Transverse colon (tissue), 4 donors: ENCODE measurements at regions of chr9 and their contacts with region 1.

Region 1: GRCh38 chr9:73081979-73082657 is 69.5 kb upstream of the ANXA1 start:
- DNase-seq: no peak
- H3K4me3 ChIP-seq: no peak overlapping the region
- H3K27ac ChIP-seq: peak overlapping the region in 2 of 4 donors; percentile 10 to 59
- H3K4me1 ChIP-seq: peaks cover 13 to 48% (median 27%) of the 10 kb centered on the region in 4 donors
- H3K27me3 ChIP-seq: no peaks in the 10 kb centered on the region
- CTCF ChIP-seq: peak; percentile 70 to 77 (median 75)
- EP300 ChIP-seq: no peak
- POLR2A ChIP-seq: no peak

Region 2: GRCh38 chr9:73023025-73023541 is 59.0 kb before region 1 on chr9:
- in situ Hi-C with region 1: no loop called
- intact Hi-C with region 1: loop called (anchors 10 kb)
- DNase-seq: peak; percentile 67
- H3K4me3 ChIP-seq: no peak overlapping the region
- H3K27ac ChIP-seq: peak overlapping the region in 3 of 4 donors; percentile 20 to 38 (median 30)
- H3K4me1 ChIP-seq: peaks cover 0 to 7% (median 6%) of the 10 kb centered on the region in 4 donors
- H3K27me3 ChIP-seq: no peaks in the 10 kb centered on the region
- CTCF ChIP-seq: peak; percentile 79 to 89 (median 86)
- EP300 ChIP-seq: no peak
- POLR2A ChIP-seq: no peak